PC-9 (cell line): ENCODE measurements at regions of chr11 and their contacts with region 1.

Region 1: GRCh38 chr11:33700425-33701271 is at the start of gene C11orf91:
- DNase-seq: peak; percentile 73 to 97
- H3K4me3 ChIP-seq: peak within 1 kb of the TSS; percentile 56
- H3K27ac ChIP-seq: peak within 1 kb of the TSS; percentile 68
- H3K4me1 ChIP-seq: peaks cover 68% of the 10 kb centered on the region
- H3K27me3 ChIP-seq: no peaks in the 10 kb centered on the region
- CTCF ChIP-seq: no peak
- total RNA-seq, gene C11orf91: 0.90 TPM in 1 of 2 replicates, not detected in the other

Region 2: DNA sequence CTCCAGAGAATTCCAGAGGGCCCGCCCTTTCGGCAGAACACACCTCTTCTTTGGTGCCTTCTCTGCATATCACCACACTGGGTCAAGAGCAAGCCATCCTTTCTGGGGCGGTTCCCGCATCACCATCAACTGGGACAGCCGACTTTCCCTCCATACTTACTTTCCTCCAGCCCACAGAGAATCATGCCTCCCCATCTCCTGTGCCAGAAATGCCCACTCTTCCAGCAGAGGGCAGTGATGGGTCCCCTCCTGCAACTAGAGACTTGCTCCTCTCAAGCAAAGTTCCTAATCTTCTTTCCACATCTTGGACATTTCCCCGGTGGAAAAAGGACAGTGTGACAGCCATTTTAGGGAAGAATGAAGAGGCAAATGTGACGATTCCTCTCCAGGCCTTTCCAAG is 157.7 kb before region 1 on chr11:
- CTCF ChIA-PET with region 1: no interaction called
- POLR2A ChIA-PET with region 1: no interaction called
- intact Hi-C with region 1: loop called (anchors 5 kb)
- DNase-seq: peak in 1 of 2 experiments; percentile 58
- H3K4me3 ChIP-seq: no peak overlapping the region
- H3K27ac ChIP-seq: no peak overlapping the region
- H3K4me1 ChIP-seq: no peaks in the 10 kb centered on the region
- H3K27me3 ChIP-seq: no peaks in the 10 kb centered on the region
- CTCF ChIP-seq: peak; percentile 84

Region 3: DNA sequence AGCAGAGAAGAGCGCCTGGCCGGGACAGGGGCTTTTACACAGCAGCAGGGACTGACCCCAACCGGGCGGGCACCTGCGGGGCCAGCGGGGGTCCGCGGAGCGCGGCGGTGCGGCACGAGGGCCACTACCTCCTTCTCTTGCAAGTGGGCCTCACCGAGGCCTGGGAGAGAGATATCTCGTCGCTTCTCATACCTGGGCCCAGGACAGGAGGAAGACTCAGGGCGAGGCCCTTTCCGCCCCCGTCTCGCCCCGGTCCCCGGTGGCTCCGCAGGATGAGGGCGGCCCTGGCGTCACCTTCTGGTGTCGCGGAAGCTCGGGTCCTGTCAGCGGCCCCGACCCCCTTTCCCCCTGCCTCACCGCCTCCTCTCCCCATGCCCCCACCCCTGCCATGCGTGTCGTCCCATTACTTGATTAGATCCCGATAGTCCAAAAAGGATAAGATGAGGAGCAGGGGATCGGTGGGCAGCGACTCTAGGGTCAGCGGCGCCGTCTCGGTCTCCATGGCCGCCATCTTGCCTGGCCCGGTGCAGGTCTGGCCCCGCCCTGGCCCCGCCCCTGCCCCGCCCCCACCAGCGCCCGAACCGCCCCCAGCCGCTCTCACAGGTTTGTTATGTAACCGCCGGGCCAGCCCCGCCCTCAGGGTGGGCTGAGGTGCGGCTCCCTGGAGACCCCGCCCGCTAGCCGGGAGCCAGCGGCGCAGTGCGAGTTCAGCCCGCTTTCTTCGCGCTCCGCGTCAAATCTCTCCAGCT is 73.5 kb after region 1 on chr11 and contains the start of gene FBXO3:
- CTCF ChIA-PET with region 1: no interaction called
- POLR2A ChIA-PET with region 1: interaction called, 54 read pairs
- intact Hi-C with region 1: no loop called
- DNase-seq: peak; percentile 75 to 92
- H3K4me3 ChIP-seq: peak within 1 kb of the TSS; percentile 96
- H3K27ac ChIP-seq: peak within 1 kb of the TSS; percentile 38
- H3K4me1 ChIP-seq: peaks cover 50% of the 10 kb centered on the region
- H3K27me3 ChIP-seq: no peaks in the 10 kb centered on the region
- CTCF ChIP-seq: no peak
- total RNA-seq, gene FBXO3: 28.3 and 32.9 TPM in 2 replicates